ENCODE measurements at regions of chr16 and their contacts with region 1.

Region 1: DNA sequence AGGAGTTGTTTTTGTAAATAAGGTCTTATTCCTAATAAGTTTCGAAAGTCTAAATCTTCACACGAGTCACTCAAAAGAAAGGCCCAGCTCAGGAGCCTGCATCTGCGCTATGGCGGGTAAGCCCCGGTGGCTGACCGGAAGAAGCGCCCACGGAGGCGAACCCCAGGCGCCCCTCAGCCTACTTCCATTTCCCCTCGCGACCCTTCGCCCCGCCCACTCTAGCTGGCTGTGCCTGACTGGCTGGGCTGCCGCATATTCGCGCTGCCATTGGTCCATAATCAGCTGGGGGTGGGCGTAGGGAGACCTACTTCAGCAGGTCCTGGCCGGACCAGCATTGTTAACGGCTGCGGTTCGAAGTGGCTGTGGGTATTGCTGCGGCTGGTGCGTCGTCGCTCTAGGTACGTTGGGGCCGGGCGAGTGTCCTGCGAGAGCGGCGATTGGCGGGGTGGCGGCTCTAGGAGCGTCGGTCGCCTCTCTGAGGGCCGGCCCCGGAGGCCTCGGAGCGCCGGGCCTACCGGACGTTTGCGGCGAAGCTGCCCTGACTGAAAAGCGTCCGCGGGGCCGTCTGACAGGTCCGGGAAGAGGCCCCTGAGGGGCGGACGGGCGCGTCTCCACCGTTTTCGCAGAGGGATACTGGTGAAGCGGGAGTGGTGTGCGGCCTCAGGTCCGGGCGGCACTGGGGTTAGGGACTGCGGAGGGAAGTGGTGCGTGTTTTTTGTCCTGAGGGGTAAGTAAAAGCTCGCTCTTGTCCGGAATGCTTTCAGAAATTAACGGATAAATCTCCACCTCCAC is at the start of gene ATF7IP2:
- DNase-seq: peak; percentile 73 to 92 (median 89)
- ATAC-seq: peak; percentile 96
- H3K4me3 ChIP-seq: peak within 1 kb of the TSS; percentile 89 to 90
- H3K4me3 Mint-ChIP-seq: peak within 1 kb of the TSS; percentile 95
- H3K27ac ChIP-seq: peak within 1 kb of the TSS; percentile 72 to 73
- H3K27ac Mint-ChIP-seq: peak within 1 kb of the TSS; percentile 97
- H3K4me1 ChIP-seq: peaks cover 34% of the 10 kb centered on the region
- H3K4me1 Mint-ChIP-seq: peaks cover 52% of the 10 kb centered on the region
- H3K27me3 ChIP-seq: no peaks in the 10 kb centered on the region
- H3K27me3 Mint-ChIP-seq: no peaks in the 10 kb centered on the region
- CTCF ChIP-seq: no peak
- total RNA-seq, gene ATF7IP2: 88.1 to 98.0 TPM

Region 2: GRCh38 chr16:8797364-8798173 is 1588.4 kb before region 1 on chr16 and contains the starts of genes PMM2 and TMEM186:
- CTCF ChIA-PET with region 1: no interaction called
- POLR2A ChIA-PET with region 1: no interaction called
- intact Hi-C with region 1: loop called in 1 of 2 experiments (anchors 5 kb)
- DNase-seq: peak; percentile 87 to 98 (median 95)
- ATAC-seq: peak; percentile 95
- H3K4me3 ChIP-seq: peak within 1 kb of the TSS; percentile 77 to 97
- H3K4me3 Mint-ChIP-seq: peak within 1 kb of the TSS; percentile 95
- H3K27ac ChIP-seq: peak within 1 kb of the TSS; percentile 78 to 81
- H3K27ac Mint-ChIP-seq: peak within 1 kb of the TSS; percentile 93
- H3K4me1 ChIP-seq: peaks cover 34% of the 10 kb centered on the region
- H3K4me1 Mint-ChIP-seq: peaks cover 46% of the 10 kb centered on the region
- H3K27me3 ChIP-seq: no peaks in the 10 kb centered on the region
- H3K27me3 Mint-ChIP-seq: no peaks in the 10 kb centered on the region
- CTCF ChIP-seq: no peak
- total RNA-seq, gene PMM2: 29.6 to 32.7 TPM
- total RNA-seq, gene TMEM186: 2.4 to 2.9 TPM

Region 3: DNA sequence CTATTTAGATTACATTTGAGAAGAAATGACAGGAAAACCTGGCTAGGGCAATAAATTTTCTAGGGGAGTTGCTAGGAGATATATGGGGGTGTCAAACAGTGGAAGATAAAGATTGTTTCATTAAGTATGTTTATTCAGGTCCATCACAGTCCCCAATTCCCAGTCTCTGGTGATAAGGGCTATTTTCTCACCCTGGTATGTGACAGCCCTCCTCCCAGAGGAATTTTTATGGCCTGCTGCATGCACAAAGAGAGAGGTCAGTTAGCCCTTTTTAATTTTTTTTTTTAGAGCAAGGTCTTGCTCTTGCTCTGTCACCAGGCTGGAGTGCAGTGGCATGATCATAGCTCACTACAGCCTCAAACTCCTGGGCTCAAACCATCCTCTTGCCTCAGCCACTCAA is 53.7 kb before region 1 on chr16:
- CTCF ChIA-PET with region 1: interaction called, 4 read pairs
- POLR2A ChIA-PET with region 1: interaction called, 4 read pairs
- intact Hi-C with region 1: loop called (anchors 5 kb)
- DNase-seq: no peak
- ATAC-seq: no peak
- H3K4me3 ChIP-seq: no peak overlapping the region
- H3K4me3 Mint-ChIP-seq: no peak overlapping the region
- H3K27ac ChIP-seq: no peak overlapping the region
- H3K27ac Mint-ChIP-seq: peak overlapping the region; percentile 73
- H3K4me1 ChIP-seq: peaks cover 28% of the 10 kb centered on the region
- H3K4me1 Mint-ChIP-seq: peaks cover 52% of the 10 kb centered on the region
- H3K27me3 ChIP-seq: no peaks in the 10 kb centered on the region
- H3K27me3 Mint-ChIP-seq: no peaks in the 10 kb centered on the region
- CTCF ChIP-seq: no peak

Region 4: GRCh38 chr16:10370096-10370726 is 15.7 kb before region 1 on chr16:
- CTCF ChIA-PET with region 1: no interaction called
- POLR2A ChIA-PET with region 1: interaction called, 5 read pairs
- intact Hi-C with region 1: loop called in 1 of 2 experiments (anchors 1 kb)
- DNase-seq: no peak
- ATAC-seq: no peak
- H3K4me3 ChIP-seq: no peak overlapping the region
- H3K4me3 Mint-ChIP-seq: no peak overlapping the region
- H3K27ac ChIP-seq: no peak overlapping the region
- H3K27ac Mint-ChIP-seq: no peak overlapping the region
- H3K4me1 ChIP-seq: no peaks in the 10 kb centered on the region
- H3K4me1 Mint-ChIP-seq: peaks cover 5% of the 10 kb centered on the region
- H3K27me3 ChIP-seq: no peaks in the 10 kb centered on the region
- H3K27me3 Mint-ChIP-seq: no peaks in the 10 kb centered on the region
- CTCF ChIP-seq: no peak

Region 5: DNA sequence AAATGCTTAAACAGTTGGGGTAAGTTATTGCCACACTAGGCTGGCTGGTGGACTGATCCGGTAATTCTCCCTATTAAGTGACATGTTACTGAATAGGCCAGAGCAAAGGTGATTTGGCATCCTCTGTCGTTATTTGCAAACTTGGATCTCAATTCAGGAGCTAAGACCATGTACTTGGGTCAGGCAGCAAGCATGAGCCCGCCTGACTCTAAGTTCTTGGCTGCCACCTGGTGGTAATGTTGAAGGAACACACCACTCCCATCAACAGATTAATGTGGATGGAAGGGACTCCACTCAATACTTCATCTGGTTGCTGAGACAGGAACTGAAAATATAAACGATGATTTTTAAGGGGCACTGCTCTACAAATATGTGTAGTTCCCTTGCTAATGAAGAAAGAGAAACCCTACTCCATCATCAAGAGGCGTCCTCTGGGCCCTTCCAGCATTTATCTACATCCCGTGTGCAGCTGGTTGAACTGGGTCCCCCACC is 123.7 kb after region 1 on chr16:
- CTCF ChIA-PET with region 1: interaction called, 4 read pairs
- POLR2A ChIA-PET with region 1: no interaction called
- intact Hi-C with region 1: loop called in 1 of 2 experiments (anchors 5 kb)
- DNase-seq: peak; percentile 28 to 85 (median 67)
- ATAC-seq: peak; percentile 87
- H3K4me3 ChIP-seq: no peak overlapping the region
- H3K4me3 Mint-ChIP-seq: no peak overlapping the region
- H3K27ac ChIP-seq: no peak overlapping the region
- H3K27ac Mint-ChIP-seq: no peak overlapping the region
- H3K4me1 ChIP-seq: no peaks in the 10 kb centered on the region
- H3K4me1 Mint-ChIP-seq: peaks cover 2% of the 10 kb centered on the region
- H3K27me3 ChIP-seq: no peaks in the 10 kb centered on the region
- H3K27me3 Mint-ChIP-seq: no peaks in the 10 kb centered on the region
- CTCF ChIP-seq: peak; percentile 75

Measured in CD8-positive, alpha-beta T cell (primary cell).